ENCODE measurements at regions of chr3 and their contacts with region 1.

Region 1: GRCh38 chr3:141030296-141030695 is 20.9 kb upstream of the SPSB4 start:
- DNase-seq: no peak
- H3K4me3 ChIP-seq: no peak overlapping the region
- H3K27ac ChIP-seq: no peak overlapping the region
- H3K27me3 ChIP-seq: no peaks in the 10 kb centered on the region
- CTCF ChIP-seq: no peak

Region 2: DNA sequence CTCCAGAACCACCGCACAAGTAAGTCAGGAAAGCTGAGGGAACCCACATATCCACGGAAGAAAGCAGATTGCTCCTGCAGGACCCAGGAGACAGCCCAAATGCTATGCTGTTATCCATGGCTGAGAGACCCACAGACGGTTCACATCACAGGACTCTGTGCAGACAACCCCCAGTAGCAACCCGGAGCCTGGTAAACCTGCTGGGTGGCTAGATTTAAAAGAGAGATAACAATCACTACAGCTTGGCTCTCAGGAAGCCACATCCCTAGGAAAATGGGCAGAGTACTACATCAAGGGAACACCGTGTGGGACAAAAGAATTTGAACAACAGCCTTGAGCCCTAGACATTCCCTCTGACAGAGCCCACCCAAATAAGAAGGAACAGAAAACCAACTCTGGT is 366.2 kb before region 1 on chr3:
- CTCF ChIA-PET with region 1: no interaction called
- POLR2A ChIA-PET with region 1: no interaction called
- DNase-seq: no peak
- H3K4me3 ChIP-seq: no peak overlapping the region
- H3K27ac ChIP-seq: no peak overlapping the region
- H3K27me3 ChIP-seq: no peaks in the 10 kb centered on the region
- CTCF ChIP-seq: no peak

Region 3: DNA sequence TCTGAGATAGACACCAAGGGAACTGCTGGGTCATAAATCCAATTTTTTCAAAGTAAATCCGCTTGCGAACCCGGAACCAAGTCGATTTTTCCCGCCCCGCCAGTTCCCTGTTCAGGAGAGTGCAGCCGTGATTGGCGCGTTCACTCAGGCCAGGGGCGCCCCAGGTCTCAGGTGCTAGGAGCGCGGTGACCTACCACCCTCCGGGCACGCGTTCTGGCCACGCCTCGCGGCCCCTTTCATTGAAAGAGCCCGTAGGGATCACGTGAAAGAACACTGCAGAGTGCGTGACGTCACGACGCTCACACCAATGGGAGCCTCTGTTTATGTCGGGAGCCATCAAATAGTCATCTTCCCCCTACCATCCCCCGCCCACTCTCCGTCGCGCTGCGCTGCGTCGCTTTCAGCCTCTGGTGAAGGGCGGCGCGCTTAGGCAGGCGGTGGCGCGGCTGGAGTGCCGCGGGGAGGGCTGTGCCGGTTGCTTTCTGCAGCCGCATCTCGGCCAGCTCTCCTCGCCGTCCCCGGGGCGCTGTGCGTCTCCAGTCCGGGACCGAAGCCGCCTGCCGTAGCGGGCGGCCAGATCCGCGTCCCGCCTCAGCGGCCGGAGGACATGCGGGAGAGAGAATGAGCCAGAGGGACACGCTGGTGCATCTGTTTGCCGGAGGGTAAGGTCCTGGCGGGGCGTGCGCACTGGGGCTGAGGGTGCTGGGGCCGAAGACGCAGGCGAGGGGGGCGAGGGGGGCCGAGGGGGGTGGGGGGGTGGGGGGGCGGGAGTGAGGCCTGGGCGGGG is 88.7 kb before region 1 on chr3 and contains the start of gene SLC25A36:
- CTCF ChIA-PET with region 1: no interaction called
- POLR2A ChIA-PET with region 1: no interaction called
- DNase-seq: peak; percentile 89
- H3K4me3 ChIP-seq: peak within 1 kb of the TSS; percentile 91
- H3K27ac ChIP-seq: peak within 1 kb of the TSS; percentile 97
- H3K27me3 ChIP-seq: no peaks in the 10 kb centered on the region
- CTCF ChIP-seq: no peak
- polyA plus RNA-seq, gene SLC25A36: 68.8 and 104 TPM in 2 replicates

Region 4: DNA sequence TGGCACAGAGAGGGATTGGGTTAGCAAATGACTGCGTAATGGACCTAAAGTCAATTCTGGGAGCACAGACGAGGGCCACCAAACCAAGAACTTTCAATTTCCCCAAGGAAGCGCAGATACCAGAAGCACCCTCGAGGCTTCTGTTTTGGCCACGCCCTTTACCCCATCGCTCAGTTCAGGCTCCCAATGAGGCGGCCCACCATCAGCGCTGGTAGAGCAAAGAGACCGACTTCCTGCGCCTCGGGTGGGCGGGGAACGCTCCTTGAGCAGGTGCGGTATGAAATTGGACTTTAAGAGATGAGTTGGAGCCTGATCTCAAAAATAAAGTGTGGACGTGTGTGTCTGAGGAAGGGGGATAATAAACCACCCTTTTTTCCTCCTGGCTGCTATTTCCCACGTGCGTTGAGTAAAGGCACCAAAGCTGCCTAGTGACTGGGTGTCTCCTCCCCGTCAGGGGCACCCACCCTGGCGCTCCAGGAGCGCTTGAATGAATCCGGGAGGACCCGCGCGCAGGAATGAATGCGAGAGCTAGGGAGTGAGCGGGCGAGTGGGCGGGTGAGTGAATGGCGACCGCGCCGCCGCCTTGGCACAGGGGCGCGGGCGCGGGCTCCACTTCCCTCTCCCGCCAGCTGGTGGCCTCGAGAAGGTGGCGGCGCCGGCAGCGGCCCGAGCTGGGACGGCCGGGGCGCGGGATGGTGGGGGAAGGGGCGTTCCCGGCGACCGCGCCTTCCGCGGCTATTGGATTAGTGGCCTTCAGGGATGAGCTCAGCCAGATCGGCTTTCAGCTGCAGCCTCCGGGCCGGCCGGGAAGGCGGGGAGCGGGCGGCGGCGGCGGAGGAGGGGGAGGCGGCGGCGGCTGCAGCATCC is 20.5 kb after region 1 on chr3 and contains the start of gene SPSB4:
- CTCF ChIA-PET with region 1: no interaction called
- POLR2A ChIA-PET with region 1: no interaction called
- DNase-seq: no peak
- H3K4me3 ChIP-seq: peak within 1 kb of the TSS; percentile 35
- H3K27ac ChIP-seq: no peak within 1 kb of the TSS
- H3K27me3 ChIP-seq: peaks cover 48% of the 10 kb centered on the region
- CTCF ChIP-seq: no peak
- polyA plus RNA-seq, gene SPSB4: not detected in 2 replicates

Region 5: DNA sequence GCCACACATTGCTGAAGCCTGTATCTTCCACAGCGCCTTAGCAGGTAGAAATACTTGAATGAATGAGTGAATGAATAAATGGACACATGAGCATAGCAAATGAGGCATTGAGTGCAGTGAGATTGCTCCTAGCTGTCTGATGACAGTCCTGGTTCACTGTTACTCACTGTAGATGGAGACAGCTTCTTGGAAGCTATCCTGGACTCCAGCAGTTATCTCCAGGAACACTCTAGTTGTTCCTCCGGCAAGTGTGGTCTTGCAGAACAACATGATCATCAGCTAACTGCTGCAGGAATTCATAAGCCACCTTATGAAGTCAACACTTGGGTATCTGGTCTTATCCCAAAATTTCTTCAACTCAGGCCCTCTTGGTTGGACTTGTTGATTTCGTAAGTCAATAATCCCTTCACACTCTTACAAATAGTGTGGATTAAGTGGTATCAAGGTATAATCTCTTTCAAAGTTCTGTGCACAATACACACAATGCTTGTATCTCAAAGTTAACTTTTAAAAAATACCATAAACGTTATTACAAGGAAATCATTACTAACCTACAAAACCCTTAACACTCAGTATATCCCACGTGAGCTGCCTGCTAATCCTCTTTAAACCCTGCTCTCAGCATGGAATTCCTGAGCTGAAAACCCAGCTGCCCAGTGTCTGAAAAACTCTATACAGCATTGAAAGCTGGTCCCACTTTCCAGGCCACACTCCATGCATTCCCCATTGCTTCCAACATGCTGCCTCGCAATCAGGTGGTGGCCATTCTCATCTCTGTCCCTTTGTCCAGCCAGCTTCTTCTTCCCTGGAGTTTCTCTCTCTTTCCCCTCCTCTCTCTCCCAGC is 323.6 kb after region 1 on chr3:
- CTCF ChIA-PET with region 1: no interaction called
- POLR2A ChIA-PET with region 1: no interaction called
- DNase-seq: no peak
- H3K4me3 ChIP-seq: no peak overlapping the region
- H3K27ac ChIP-seq: no peak overlapping the region
- H3K27me3 ChIP-seq: no peaks in the 10 kb centered on the region
- CTCF ChIP-seq: no peak

Region 6: DNA sequence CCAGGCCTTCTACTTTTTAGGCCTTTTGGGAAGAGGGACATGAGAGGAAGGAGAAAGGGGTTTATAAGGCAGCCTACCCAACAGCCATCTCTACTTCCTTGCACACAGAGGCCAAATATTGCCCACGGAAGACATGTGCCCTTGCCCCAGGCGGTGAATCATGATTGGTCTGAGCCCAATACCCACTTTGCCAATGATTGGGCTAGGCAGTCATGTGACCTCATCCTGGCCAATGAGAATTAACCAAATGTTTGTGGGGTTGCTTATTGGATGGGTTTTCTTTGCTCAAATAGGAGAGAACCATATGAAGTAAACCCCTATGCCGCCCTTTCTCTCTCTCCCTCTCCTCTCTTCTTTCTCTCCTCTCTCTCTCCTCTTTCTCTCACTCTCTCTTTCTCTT is 804.0 kb after region 1 on chr3:
- CTCF ChIA-PET with region 1: interaction called, 10 read pairs
- POLR2A ChIA-PET with region 1: no interaction called
- DNase-seq: no peak
- H3K4me3 ChIP-seq: no peak overlapping the region
- H3K27ac ChIP-seq: no peak overlapping the region
- H3K27me3 ChIP-seq: peaks cover 6% of the 10 kb centered on the region
- CTCF ChIP-seq: no peak

Measured in AG04450 (cell line).